Aorta (tissue), 5 donors: ENCODE measurements at regions of chrX and their contacts with region 1.

Region 1: GRCh38 chrX:13473442-13474163 is 95.8 kb upstream of the EGFL6 start:
- DNase-seq: no peak
- ATAC-seq: no peak
- H3K4me3 ChIP-seq: no peak overlapping the region
- H3K27ac ChIP-seq: peak overlapping the region; percentile 1 to 70
- H3K4me1 ChIP-seq: no peaks in the 10 kb centered on the region
- H3K27me3 ChIP-seq: no peaks in the 10 kb centered on the region

Region 2: DNA sequence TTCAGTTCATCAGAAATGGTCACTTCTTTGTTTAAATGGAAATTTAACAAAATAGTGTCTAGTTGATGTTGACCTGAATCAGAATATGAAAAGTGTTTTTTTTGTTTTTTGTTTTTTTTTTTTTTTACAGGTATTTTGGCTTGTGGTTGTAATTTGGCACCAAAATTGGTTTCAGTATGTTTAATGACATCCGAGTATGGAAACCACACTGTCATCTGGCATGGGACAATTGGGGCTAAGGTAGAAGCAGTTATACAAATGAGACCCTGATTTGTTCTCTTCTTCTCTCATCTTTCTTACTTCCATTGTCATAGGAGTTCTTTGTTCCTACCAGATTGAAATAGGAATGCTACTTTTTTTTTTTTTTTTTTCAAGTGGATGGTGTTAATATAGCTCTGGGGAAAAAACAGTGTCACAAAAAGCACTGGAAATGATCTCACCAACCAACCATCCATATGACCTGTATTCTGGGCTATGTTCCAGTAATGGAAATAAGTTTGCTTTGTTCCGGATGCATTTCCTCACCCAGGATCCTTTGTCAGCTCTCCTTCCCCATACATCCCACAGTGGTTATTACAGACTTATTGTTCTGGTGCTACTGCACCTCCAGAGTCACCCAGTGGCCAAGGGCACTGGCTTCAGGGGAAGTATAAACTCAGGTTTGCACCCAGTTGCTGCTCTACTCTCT is 249.6 kb before region 1 on chrX:
- intact Hi-C with region 1: loop called in 1 of 2 experiments (anchors 10 kb)
- DNase-seq: no peak
- ATAC-seq: peak; percentile 54
- H3K4me3 ChIP-seq: no peak overlapping the region
- H3K27ac ChIP-seq: no peak overlapping the region
- H3K4me1 ChIP-seq: no peaks in the 10 kb centered on the region
- H3K27me3 ChIP-seq: no peaks in the 10 kb centered on the region

Region 3: DNA sequence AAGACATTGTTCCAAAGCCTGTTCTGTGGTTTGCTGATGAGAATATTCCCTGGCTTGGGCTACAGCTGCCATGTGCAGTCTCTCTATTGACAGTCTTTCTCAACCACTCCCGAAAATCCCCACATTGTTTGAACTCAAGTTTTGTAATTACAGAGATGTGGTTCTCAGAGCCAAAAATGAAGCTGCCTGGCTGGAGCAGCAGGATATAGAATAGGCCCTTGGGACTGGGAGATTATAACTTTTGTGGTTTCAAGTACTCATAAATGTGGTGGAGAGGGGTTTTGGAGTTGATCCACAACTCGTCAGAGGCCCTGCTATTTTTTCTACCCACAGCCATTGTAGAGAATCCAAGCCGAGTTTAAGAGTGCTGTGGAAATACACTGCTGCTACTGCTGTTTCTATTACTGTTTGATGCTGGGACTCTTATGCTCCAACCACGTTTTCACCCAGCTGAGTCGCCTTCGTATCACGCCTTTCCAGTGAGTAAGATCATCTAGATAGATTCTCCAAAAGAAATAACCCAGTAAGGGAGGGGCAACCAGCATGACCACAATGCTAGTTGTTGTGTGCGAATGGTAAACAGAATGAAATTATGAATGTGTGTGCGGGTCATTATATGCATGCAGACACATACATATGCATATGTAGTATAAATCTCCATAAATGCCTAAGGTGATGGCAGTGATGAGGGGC is 96.6 kb before region 1 on chrX:
- intact Hi-C with region 1: loop called in 1 of 2 experiments (anchors 10 kb)
- DNase-seq: peak in 1 of 2 donors; percentile 49
- ATAC-seq: no peak
- H3K4me3 ChIP-seq: no peak overlapping the region
- H3K27ac ChIP-seq: no peak overlapping the region
- H3K4me1 ChIP-seq: peaks cover 2 to 4% of the 10 kb centered on the region in 2 donors
- H3K27me3 ChIP-seq: no peaks in the 10 kb centered on the region

Region 4: DNA sequence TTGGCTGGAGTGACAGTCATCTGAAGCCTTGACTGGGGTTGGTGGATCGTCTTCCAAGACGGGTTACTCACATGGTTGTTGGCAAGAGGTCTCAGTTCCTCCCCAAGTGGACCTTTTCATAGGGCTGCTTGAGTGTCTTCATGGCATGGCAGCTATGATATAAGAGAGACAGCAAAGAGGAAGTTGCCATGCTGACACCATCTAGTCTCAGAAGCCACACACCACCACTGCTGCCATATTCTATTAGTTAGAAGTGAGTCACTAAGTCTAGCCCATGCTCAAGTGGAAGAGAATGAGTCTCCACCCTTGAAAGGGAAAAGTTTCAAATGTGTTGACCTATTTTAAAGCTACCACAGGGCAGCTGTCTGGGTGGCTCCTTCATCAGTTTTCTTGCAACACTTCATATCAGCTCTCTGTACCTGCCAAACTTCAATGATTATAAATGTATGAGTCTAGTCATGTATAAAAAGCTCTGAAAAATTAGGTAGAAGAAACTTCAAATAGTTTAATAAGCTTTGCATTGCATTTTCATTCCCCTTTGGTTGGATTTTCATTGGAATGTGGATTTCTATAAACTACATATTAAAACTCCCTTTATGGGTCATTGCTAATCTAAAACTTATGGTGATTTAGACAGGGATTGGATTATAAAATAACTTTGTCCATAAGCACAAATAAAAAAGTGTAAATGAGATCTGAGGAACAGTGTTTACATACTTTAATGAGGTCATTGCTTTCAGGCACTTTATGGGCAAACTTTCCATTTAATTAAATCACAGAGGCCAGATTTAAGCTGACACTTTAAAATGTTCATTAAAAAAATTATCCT is 85.7 kb before region 1 on chrX:
- intact Hi-C with region 1: no loop called
- DNase-seq: no peak
- ATAC-seq: no peak
- H3K4me3 ChIP-seq: no peak overlapping the region
- H3K27ac ChIP-seq: no peak overlapping the region
- H3K4me1 ChIP-seq: no peaks in the 10 kb centered on the region
- H3K27me3 ChIP-seq: no peaks in the 10 kb centered on the region